ENCODE measurements at regions of chr10 and their contacts with region 1.

Region 1: DNA sequence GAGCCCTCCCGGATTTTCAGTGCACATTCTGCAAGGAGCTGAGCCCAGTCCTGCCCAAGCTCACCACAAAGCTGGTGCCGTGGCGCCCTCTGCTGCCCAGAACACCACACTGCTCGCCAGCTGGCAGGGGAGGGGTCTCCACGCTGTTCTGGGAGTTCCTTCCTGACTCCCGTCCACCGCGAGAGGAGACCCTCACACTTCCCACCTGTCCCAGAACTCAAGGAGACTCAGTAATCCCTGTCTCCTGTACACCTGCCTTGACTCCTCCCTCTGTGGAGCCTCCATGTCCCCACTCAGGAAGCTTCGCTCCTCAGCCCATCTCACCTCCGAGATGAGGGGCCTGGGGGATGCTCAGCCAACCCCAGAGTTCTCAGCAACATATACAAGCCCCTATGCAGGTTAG is 11.3 kb downstream of the C10orf105 start:
- DNase-seq: peak; percentile 83
- ATAC-seq: peak; percentile 77
- H3K4me3 Mint-ChIP-seq: no peak overlapping the region
- H3K27ac Mint-ChIP-seq: no peak overlapping the region
- H3K4me1 Mint-ChIP-seq: peaks cover 30% of the 10 kb centered on the region
- H3K27me3 Mint-ChIP-seq: no peaks in the 10 kb centered on the region

Region 2: GRCh38 chr10:71314028-71314693 is 394.1 kb before region 1 on chr10:
- CTCF ChIA-PET with region 1: interaction called, 17 read pairs
- POLR2A ChIA-PET with region 1: no interaction called
- intact Hi-C with region 1: loop called (anchors 2 to 5 kb)
- DNase-seq: peak; percentile 71
- ATAC-seq: peak; percentile 24
- H3K4me3 Mint-ChIP-seq: no peak overlapping the region
- H3K27ac Mint-ChIP-seq: no peak overlapping the region
- H3K4me1 Mint-ChIP-seq: peaks cover 18% of the 10 kb centered on the region
- H3K27me3 Mint-ChIP-seq: peaks cover 7% of the 10 kb centered on the region

Region 3: GRCh38 chr10:71396084-71396720 is 312.1 kb before region 1 on chr10:
- CTCF ChIA-PET with region 1: interaction called, 3 read pairs
- POLR2A ChIA-PET with region 1: no interaction called
- intact Hi-C with region 1: loop called in 1 of 2 experiments (anchors 1 kb)
- DNase-seq: peak; percentile 67
- ATAC-seq: peak; percentile 88
- H3K4me3 Mint-ChIP-seq: no peak overlapping the region
- H3K27ac Mint-ChIP-seq: no peak overlapping the region
- H3K4me1 Mint-ChIP-seq: peaks cover 8% of the 10 kb centered on the region
- H3K27me3 Mint-ChIP-seq: peaks cover 51% of the 10 kb centered on the region

Region 4: DNA sequence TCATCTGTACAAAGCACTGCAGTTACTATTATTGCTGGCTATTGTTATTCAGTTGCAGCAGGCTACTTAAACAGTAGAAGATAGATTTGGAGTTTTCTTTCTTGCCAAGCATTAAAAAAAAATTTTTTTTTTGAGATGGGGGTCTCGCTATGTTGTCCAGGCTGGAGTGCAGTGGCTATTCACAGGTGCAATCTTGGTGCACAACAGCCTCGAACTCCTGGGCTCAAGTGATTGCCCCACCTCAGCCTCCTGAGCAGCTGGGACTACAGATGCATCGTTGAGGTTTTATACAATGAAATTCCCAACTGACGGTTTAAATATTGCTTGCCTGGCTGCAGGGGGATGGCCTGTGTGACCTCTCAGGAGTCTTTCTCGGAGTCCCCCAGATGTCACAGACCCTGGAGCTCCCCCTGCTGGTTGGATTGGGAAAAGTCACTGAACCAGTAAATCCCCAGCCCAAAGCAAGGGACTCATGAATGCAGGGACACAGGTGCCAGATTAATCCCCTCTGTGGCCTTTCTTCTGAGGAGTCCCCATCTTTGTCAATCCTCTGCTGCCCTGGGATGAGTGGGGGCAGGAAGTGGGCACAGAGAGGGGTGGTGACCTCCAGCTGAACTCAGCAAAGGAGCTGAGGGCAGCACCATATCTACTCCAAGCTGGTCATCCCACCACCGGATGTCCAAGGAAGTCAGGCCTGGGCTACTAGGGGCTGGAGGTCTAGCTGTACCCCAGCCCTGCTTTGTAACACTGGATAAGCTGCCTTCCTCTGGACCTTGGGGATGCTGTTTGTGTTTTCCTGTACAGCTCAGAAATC is 138.3 kb before region 1 on chr10:
- CTCF ChIA-PET with region 1: interaction called, 17 read pairs
- POLR2A ChIA-PET with region 1: no interaction called
- intact Hi-C with region 1: no loop called
- DNase-seq: peak; percentile 89
- ATAC-seq: peak; percentile 69
- H3K4me3 Mint-ChIP-seq: no peak overlapping the region
- H3K27ac Mint-ChIP-seq: no peak overlapping the region
- H3K4me1 Mint-ChIP-seq: no peaks in the 10 kb centered on the region
- H3K27me3 Mint-ChIP-seq: no peaks in the 10 kb centered on the region

Region 5: GRCh38 chr10:71719042-71719441 is 10.7 kb after region 1 on chr10:
- CTCF ChIA-PET with region 1: interaction called, 28 read pairs
- POLR2A ChIA-PET with region 1: no interaction called
- intact Hi-C with region 1: no loop called
- DNase-seq: no peak
- ATAC-seq: no peak
- H3K4me3 Mint-ChIP-seq: no peak overlapping the region
- H3K27ac Mint-ChIP-seq: no peak overlapping the region
- H3K4me1 Mint-ChIP-seq: peaks cover 37% of the 10 kb centered on the region
- H3K27me3 Mint-ChIP-seq: no peaks in the 10 kb centered on the region

Region 6: GRCh38 chr10:71812016-71812912 is 104.0 kb after region 1 on chr10:
- CTCF ChIA-PET with region 1: interaction called, 8 read pairs
- POLR2A ChIA-PET with region 1: interaction called, 3 read pairs
- intact Hi-C with region 1: loop called (anchors 5 kb)
- DNase-seq: peak; percentile 88
- ATAC-seq: peak; percentile 98
- H3K4me3 Mint-ChIP-seq: no peak overlapping the region
- H3K27ac Mint-ChIP-seq: no peak overlapping the region
- H3K4me1 Mint-ChIP-seq: peaks cover 2% of the 10 kb centered on the region
- H3K27me3 Mint-ChIP-seq: no peaks in the 10 kb centered on the region

Measured in activated CD4-positive, alpha-beta T cell treated with anti-CD3 and anti-CD28 coated beads for 36 hours (primary cell).